Posterior cingulate gyrus (tissue), 11 donors: ENCODE measurements at regions of chr7 and their contacts with region 1.

Region 1: DNA sequence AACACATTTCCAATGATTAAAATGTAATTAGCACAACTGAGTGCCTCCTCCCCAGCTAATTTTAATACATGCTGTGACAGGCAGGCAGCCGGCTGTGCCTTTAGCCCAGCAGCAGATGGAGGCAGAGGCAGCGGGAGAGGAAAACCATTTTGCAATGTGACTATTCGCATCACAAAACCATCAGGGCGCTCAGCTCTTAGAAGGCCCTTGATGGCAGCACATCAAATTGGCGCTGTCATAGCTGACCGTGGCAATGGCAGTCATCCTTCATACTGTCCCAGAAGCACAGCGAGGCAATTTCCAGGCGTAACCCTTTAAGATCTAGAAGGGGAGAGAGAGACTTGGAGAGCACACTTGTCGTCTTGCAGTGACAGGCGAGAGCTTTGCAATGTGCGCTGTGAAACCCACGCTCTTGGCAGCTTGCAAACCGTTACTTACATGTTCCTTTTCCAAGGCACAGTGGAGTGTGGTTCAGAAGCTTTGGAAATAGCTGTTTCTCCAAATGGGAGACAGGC is 714.7 kb upstream of the GALNT17 start:
- DNase-seq: peak; percentile 26 to 94 (median 62)

Region 2: GRCh38 chr7:70693686-70694360 is 276.6 kb after region 1 on chr7:
- intact Hi-C with region 1: loop called (anchors 10 kb)
- DNase-seq: peak; percentile 40 to 93 (median 59)